ENCODE measurements at regions of chr11 and their contacts with region 1.

Region 1: DNA sequence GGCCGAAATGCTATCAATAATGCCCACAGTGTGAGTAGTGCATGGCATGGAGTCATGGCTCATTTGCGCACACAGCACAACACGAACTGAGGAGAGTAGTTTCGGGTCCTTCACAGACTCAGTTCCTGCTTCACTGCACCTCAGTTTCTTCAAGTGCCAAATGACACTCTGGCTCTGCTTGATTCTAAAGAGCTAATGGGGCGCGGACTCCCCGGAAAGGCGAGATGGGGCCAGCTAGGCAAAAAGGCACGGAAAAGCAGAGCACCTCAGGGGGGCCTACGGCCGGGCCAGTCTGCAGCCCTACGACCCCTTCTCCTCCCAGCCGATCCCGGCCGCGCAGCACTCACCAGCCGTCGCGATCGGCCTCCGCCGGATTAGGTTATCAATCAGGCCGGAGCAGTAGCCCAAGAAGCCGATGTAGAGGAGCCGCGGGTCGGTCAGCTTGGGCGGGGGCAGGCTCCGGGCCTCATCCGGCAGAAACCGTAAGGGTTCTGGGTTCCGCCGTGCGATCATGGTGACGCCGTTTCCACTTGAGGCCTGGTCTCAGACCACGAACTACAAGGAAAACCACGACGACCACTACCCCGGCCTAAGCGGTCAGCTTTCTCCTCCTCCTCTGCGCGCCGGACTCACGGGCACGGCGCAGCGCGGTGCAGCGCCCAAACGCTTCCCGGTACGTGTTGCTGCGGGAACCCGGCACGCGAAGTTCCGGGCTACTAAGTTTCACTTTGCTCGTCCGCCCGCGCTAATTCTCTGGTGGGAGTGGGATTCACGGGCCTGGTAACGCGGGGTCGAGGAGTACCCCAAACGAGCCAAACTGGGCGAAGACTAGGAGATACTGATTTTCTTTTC is at the start of gene NDUFC2:
- DNase-seq: peak; percentile 92
- H3K4me3 Mint-ChIP-seq: peak within 1 kb of the TSS; percentile 94
- H3K27ac Mint-ChIP-seq: peak within 1 kb of the TSS; percentile 91
- H3K4me1 Mint-ChIP-seq: peaks cover 51% of the 10 kb centered on the region
- H3K27me3 Mint-ChIP-seq: peaks cover 2% of the 10 kb centered on the region
- total RNA-seq, gene NDUFC2: 207 and 219 TPM in 2 replicates

Region 2: DNA sequence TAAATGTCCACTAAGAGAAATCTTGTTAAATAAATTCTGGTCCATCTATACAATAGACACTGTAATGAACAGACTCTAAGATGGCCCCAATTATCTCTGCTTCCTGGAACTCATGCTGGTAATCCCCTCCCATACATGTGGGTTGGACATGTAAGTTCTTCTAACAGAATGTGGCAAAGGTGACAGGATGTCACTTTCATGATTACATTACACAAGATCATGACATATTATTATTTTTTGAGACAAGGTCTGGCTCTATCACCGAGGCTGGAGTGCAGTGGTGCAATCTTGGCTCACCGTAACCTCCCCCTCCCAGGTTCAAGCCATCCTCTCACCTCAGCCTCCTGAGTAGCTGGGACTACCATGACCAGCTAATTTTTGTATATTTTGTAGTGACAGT is 14.8 kb after region 1 on chr11:
- intact Hi-C with region 1: loop called (anchors 1 kb)
- DNase-seq: peak; percentile 75
- H3K4me3 Mint-ChIP-seq: peak overlapping the region; percentile 12
- H3K27ac Mint-ChIP-seq: peak overlapping the region; percentile 87
- H3K4me1 Mint-ChIP-seq: peaks cover 10% of the 10 kb centered on the region
- H3K27me3 Mint-ChIP-seq: no peaks in the 10 kb centered on the region

Region 3: DNA sequence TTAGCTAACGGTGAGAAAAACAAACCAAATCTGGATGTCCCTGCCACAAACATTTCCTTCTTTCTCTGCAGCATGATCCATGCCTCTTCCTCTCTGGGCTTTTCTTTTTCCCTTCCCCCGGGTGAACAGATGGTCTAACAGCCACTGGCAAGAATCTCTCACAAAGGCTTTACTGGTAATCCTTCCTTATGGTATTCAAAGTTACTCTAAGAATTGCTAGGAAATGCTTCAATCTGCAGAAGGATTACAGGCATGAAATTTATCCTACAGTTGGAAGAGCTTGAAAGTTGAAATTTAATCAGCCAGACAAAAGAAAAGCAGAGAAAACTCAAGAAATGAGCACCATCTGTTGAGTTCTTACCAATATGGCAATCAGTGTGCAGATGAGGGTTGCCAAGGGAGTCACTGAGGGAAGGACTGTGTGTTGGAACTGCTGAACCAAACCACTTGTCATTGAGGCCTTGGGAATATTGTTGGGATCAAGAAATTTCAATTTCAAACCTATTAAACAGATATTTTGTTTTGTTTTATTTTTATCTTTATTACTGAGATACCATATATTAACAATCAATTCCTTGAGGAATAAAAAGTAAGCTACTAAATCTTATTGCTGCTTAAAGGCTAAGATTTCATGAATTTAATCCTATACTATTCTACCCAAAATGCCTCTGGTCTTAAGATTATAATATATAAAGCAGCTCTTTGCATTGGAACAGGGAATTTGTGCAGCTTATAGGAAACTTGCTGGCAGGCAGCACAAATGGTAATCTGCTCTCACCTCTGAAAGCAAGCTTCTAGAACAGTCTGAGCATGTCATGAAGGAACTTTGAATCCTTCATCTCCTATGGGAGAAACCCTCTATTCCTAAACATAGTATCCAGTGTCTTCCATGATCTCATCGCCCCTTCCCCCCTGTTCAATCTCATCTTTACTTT is 29.9 kb after region 1 on chr11:
- intact Hi-C with region 1: loop called (anchors 2 kb)
- DNase-seq: no peak
- H3K4me3 Mint-ChIP-seq: no peak overlapping the region
- H3K27ac Mint-ChIP-seq: no peak overlapping the region
- H3K4me1 Mint-ChIP-seq: no peaks in the 10 kb centered on the region
- H3K27me3 Mint-ChIP-seq: no peaks in the 10 kb centered on the region

Region 4: DNA sequence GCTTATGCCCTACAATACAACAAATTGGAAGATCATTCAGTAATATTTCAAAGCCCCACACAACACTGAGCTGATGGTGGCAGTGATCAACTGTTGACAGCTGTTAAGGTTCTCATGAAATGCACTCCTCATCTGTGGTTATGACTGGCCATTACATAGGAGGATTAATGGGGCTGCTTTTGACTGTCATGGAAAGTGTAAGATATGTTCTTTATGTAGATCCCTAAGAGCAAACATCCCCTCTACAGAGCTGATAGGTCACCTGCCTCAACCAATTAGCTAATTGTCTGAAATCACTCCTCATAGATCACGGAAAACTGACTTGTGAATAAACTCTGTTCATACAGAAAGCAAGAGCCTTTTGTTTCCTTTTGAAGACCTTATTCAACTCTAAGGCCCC is 260.0 kb after region 1 on chr11:
- intact Hi-C with region 1: no loop called
- DNase-seq: peak; percentile 70
- H3K4me3 Mint-ChIP-seq: peak overlapping the region; percentile 69
- H3K27ac Mint-ChIP-seq: peak overlapping the region; percentile 94
- H3K4me1 Mint-ChIP-seq: peaks cover 70% of the 10 kb centered on the region
- H3K27me3 Mint-ChIP-seq: no peaks in the 10 kb centered on the region

Measured in activated CD4-positive, alpha-beta T cell treated with anti-CD3 and anti-CD28 coated beads, Interleukin-2, amount 10 ng/mL, durations not matched to agents 24 days and 14 days (primary cell).